Gastrocnemius medialis (tissue), 4 donors: ENCODE measurements at regions of chr20 and their contacts with region 1.

Region 1: GRCh38 chr20:24303381-24303780 is 166.0 kb upstream of the SYNDIG1 start:
- DNase-seq: no peak
- ATAC-seq: no peak
- H3K4me3 ChIP-seq: no peak overlapping the region
- H3K27ac ChIP-seq: no peak overlapping the region
- H3K4me1 ChIP-seq: no peaks in the 10 kb centered on the region
- H3K27me3 ChIP-seq: no peaks in the 10 kb centered on the region
- CTCF ChIP-seq: no peak
- POLR2A ChIP-seq: no peak

Region 2: DNA sequence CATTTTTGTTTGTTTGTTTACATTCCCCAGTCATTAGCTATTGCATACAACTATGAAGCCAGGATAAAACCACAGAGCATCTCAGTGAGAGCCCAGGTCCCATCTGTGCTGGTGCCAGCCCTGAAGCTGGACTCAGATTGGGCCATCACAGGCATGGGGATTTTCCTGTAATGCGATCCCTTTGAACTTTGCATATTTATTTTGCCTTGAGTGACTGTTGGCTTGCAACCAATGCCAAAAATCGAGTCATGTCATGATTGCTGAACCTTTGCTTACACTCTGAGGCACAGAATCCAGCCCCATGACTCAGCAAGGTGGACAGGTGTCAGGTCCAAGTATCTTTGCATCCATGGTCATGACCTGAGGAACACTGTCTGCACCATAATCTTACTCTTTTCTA is 268.6 kb before region 1 on chr20:
- in situ Hi-C with region 1: no loop called
- intact Hi-C with region 1: no loop called
- DNase-seq: no peak
- ATAC-seq: no peak
- H3K4me3 ChIP-seq: no peak overlapping the region
- H3K27ac ChIP-seq: no peak overlapping the region
- H3K4me1 ChIP-seq: no peaks in the 10 kb centered on the region
- H3K27me3 ChIP-seq: no peaks in the 10 kb centered on the region
- CTCF ChIP-seq: no peak
- POLR2A ChIP-seq: no peak

Region 3: GRCh38 chr20:24273251-24273650 is 30.1 kb before region 1 on chr20:
- in situ Hi-C with region 1: no loop called
- intact Hi-C with region 1: no loop called
- DNase-seq: no peak
- ATAC-seq: no peak
- H3K4me3 ChIP-seq: no peak overlapping the region
- H3K27ac ChIP-seq: no peak overlapping the region
- H3K4me1 ChIP-seq: no peaks in the 10 kb centered on the region
- H3K27me3 ChIP-seq: peaks cover 0 to 2% (median 0%) of the 10 kb centered on the region in 3 donors
- CTCF ChIP-seq: no peak
- POLR2A ChIP-seq: no peak

Region 4: DNA sequence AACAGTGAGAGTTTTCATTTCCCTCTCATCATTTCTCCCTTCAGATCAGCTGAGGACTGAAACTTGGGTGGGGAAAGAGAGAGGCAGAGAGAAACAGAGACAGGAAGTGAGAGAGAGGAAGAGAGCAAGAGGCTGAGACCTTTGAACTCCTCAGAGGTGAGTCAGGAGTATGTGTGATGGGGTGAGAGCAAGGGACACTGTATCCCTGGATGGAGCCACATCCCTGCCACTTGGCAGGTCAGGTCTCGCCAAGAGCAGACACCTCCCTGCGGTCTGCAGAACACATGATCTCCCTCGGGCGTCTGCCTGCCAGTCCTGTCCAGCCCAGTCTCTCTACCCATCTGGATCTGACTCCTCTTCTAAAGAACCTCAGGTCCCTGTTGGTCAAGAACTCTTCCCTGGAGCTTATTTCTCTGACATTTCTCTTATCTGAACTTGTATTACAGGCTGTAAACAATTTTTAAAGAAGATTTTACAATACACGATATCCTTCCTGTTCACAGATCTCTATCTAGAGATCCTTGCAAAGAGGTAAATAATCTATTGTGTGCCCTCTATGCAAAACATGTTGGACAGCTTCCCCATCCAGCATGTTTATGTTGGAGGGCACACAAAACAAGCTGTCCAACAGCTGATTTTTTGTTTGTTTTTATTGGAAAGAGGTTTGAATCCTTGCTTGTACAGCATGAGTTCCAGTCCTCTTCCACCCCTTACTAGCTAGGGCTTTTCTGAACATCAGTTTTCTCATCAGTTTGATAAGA is 103.5 kb after region 1 on chr20:
- in situ Hi-C with region 1: loop called in 1 of 4 experiments (anchors 25 kb)
- intact Hi-C with region 1: no loop called
- DNase-seq: no peak
- ATAC-seq: no peak
- H3K4me3 ChIP-seq: no peak overlapping the region
- H3K27ac ChIP-seq: no peak overlapping the region
- H3K4me1 ChIP-seq: no peaks in the 10 kb centered on the region
- H3K27me3 ChIP-seq: no peaks in the 10 kb centered on the region
- CTCF ChIP-seq: no peak
- POLR2A ChIP-seq: no peak

Region 5: GRCh38 chr20:24535941-24536730 is 232.8 kb after region 1 on chr20:
- in situ Hi-C with region 1: loop called in 1 of 4 experiments (anchors 25 kb)
- intact Hi-C with region 1: no loop called
- DNase-seq: no peak
- ATAC-seq: no peak
- H3K4me3 ChIP-seq: no peak overlapping the region
- H3K27ac ChIP-seq: no peak overlapping the region
- H3K4me1 ChIP-seq: no peaks in the 10 kb centered on the region
- H3K27me3 ChIP-seq: no peaks in the 10 kb centered on the region
- CTCF ChIP-seq: no peak
- POLR2A ChIP-seq: no peak

Region 6: DNA sequence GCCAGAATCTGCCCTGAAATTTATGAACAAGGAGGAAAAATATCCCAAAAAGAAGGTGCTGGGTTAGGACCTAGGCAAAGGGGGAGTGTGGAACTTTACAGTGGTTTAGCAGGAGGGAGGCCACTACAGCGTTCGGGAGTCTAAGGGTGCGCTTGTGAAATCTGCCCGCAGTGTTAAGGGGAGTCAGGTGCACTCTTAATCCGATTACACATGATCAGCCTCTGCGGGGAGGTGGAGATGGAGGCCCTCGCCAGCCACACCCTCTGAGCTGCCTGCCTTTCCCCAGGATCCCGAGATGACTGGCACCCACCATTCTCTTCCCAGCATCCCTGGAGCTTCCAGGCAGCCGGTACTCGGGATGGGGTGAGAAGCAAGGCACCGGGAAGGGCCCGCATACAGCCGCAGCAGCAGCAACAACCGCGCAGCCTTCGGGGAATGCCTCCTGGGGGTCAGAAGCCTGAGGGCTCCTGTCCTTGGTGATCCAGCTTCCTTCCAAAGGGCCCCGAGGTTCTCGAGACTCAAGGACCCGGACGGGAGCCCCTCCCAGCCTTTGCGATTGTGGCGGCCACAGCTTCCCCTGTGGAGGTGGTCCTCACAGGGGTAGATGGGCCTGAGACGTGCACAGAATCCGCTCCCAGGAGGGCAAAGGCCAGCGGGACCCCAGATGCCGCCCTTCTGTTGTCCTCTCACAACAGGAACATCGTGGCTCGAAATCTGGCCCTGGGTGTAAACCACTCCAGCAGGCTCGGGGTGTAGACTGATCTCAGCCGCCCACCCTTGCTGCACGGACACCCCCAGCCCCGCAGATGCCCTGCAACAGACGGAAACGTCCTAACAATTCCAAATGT is 588.4 kb after region 1 on chr20:
- in situ Hi-C with region 1: no loop called
- intact Hi-C with region 1: no loop called
- DNase-seq: no peak
- ATAC-seq: no peak
- H3K4me3 ChIP-seq: no peak overlapping the region
- H3K27ac ChIP-seq: no peak overlapping the region
- H3K4me1 ChIP-seq: no peaks in the 10 kb centered on the region
- H3K27me3 ChIP-seq: no peaks in the 10 kb centered on the region
- CTCF ChIP-seq: no peak
- POLR2A ChIP-seq: no peak